Breast epithelium (tissue), 4 donors: ENCODE measurements at regions of chr6 and their contacts with region 1.

Region 1: GRCh38 chr6:40708049-40708448 is 120.9 kb upstream of the LRFN2 start:
- DNase-seq: no peak
- H3K4me3 ChIP-seq: no peak overlapping the region
- H3K27ac ChIP-seq: no peak overlapping the region
- H3K4me1 ChIP-seq: no peaks in the 10 kb centered on the region
- H3K27me3 ChIP-seq: no peaks in the 10 kb centered on the region
- CTCF ChIP-seq: no peak
- POLR2A ChIP-seq: no peak

Region 2: DNA sequence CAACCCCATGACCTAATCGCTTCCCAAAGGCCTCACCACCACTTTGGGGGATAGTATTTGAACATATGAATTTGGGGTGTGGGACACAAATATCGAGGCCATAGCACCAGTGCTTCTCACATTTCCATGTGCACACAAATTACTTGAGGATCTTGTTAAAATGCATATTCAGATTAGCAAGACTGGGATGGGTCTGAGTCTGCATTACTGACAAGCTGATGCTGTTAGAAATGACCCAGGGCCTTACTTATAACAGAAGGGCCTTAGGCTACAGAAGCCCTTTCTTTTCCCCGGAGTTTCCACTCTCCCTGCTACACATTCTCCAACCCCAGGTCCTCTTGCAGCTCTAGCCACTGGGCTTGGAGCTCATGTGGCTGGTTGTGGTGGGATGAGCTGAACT is 20.6 kb after region 1 on chr6:
- intact Hi-C with region 1: loop called (anchors 1 kb)
- DNase-seq: no peak
- H3K4me3 ChIP-seq: no peak overlapping the region
- H3K27ac ChIP-seq: no peak overlapping the region
- H3K4me1 ChIP-seq: no peaks in the 10 kb centered on the region
- H3K27me3 ChIP-seq: no peaks in the 10 kb centered on the region
- CTCF ChIP-seq: no peak
- POLR2A ChIP-seq: no peak

Region 3: DNA sequence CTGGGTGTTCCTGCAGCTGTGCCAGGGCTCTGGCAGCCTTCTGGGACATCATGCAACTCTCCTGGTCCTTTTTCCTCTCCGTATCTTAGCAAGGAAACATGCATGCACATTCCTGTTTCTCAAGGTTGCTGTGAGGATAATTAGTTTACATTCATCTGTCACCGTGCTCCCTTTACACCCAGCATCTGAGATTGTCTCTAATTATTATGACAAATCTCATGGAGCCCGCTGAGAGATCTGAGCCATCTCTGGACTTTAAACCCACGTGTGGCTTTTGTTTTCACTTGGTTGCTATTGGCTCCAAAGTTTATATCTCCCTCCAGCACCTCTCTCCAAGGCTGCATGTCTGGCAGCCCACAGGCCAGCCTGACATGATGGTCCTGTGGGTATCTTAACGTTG is 163.4 kb after region 1 on chr6:
- intact Hi-C with region 1: no loop called
- DNase-seq: no peak
- H3K4me3 ChIP-seq: no peak overlapping the region
- H3K27ac ChIP-seq: no peak overlapping the region
- H3K4me1 ChIP-seq: no peaks in the 10 kb centered on the region
- H3K27me3 ChIP-seq: no peaks in the 10 kb centered on the region
- CTCF ChIP-seq: no peak
- POLR2A ChIP-seq: no peak